ENCODE measurements at regions of chr14 and their contacts with region 1.

Region 1: GRCh38 chr14:73728717-73729330 is 14.6 kb upstream of the PNMA1 start:
- DNase-seq: peak; percentile 80 to 90
- H3K4me3 ChIP-seq: no peak overlapping the region
- H3K4me3 Mint-ChIP-seq: no peak overlapping the region
- H3K27ac Mint-ChIP-seq: peak overlapping the region; percentile 60
- H3K4me1 ChIP-seq: peaks cover 21% of the 10 kb centered on the region
- H3K4me1 Mint-ChIP-seq: peaks cover 5% of the 10 kb centered on the region
- H3K27me3 ChIP-seq: no peaks in the 10 kb centered on the region
- H3K27me3 Mint-ChIP-seq: no peaks in the 10 kb centered on the region
- CTCF ChIP-seq: peak; percentile 91 to 95

Region 2: DNA sequence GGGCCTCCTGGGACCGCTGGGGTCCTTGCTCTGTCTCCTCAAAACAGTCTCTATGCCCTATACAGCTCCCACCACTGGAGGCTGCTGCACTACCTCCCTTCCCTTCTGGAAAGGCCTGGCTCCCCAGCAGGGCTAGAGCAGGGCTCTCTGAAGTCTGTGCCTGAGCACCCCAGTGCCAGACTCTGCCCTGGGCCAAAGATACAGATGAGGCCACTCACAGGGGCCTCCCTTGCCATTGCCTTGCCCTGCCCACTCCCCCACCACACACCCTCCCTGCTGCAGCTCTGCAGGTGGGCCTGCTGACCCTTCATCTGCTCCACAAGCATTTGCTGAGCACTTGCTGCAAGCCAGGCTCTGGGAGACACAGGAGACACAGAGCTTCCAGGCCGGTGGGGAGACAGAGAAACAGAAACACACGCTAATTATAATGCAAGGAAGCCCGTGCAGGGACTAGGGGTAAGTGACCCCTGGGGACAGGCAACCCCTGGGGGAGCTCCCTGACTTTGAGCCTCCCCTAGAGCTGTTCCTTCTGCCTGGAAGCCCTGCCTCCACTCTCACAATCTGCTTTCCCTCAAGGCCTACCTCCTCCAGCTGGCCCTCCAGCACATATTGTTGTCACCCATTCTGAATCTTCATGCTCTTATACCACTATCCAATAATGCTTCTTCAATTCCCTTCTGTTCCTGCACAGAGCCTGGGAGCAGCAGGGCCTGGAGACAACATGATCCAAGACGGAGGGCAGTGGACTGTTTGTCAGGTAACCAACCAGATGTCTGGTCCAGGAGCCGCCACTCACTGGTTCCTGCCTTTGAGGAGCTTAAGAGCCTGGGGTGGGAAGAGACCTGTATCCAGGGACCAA is 17.9 kb after region 1 on chr14:
- CTCF ChIA-PET with region 1: interaction called, 32 read pairs
- POLR2A ChIA-PET with region 1: no interaction called
- intact Hi-C with region 1: no loop called
- DNase-seq: no peak
- H3K4me3 ChIP-seq: no peak overlapping the region
- H3K4me3 Mint-ChIP-seq: no peak overlapping the region
- H3K27ac Mint-ChIP-seq: no peak overlapping the region
- H3K4me1 ChIP-seq: peaks cover 58% of the 10 kb centered on the region
- H3K4me1 Mint-ChIP-seq: peaks cover 24% of the 10 kb centered on the region
- H3K27me3 ChIP-seq: no peaks in the 10 kb centered on the region
- H3K27me3 Mint-ChIP-seq: no peaks in the 10 kb centered on the region
- CTCF ChIP-seq: peak in 1 of 2 experiments; percentile 31

Region 3: GRCh38 chr14:73771848-73772638 is 43.2 kb after region 1 on chr14:
- CTCF ChIA-PET with region 1: interaction called, 10 read pairs
- POLR2A ChIA-PET with region 1: no interaction called
- intact Hi-C with region 1: no loop called
- DNase-seq: peak; percentile 91 to 94
- H3K4me3 ChIP-seq: no peak overlapping the region
- H3K4me3 Mint-ChIP-seq: peak overlapping the region; percentile 44
- H3K27ac Mint-ChIP-seq: peak overlapping the region; percentile 51
- H3K4me1 ChIP-seq: peaks cover 31% of the 10 kb centered on the region
- H3K4me1 Mint-ChIP-seq: peaks cover 50% of the 10 kb centered on the region
- H3K27me3 ChIP-seq: no peaks in the 10 kb centered on the region
- H3K27me3 Mint-ChIP-seq: no peaks in the 10 kb centered on the region
- CTCF ChIP-seq: no peak

Region 4: DNA sequence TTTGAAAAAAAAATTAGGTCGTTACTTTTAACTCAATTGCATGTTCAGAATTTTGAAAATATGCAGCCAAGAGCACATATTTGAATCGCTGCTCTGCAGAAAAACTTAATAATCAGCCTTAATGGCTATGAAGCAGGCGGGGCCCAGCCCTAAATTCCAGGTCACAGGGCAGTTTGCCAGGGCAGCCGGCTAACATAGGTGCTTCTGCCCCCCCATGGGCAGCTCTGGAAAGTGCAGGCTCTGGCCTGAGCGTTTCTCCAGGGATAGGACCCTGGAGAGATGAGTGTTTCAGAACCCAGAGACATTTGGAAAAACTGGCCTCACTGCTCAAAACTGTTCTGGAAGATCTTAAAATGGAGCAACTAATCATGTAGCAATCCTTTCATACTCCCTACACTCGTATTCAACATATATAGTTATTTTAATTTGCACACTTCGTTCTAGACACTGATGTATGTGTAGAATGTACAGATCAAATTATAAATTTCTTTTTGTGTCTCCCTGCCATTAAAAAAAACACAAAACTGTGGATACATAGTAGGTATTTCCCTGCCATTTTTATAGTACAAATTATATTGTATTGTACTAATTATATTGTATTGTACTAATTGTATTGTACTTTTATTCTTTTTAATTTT is 96.8 kb after region 1 on chr14:
- CTCF ChIA-PET with region 1: interaction called, 19 read pairs
- POLR2A ChIA-PET with region 1: no interaction called
- intact Hi-C with region 1: loop called (anchors 1 kb)
- DNase-seq: peak; percentile 79 to 86
- H3K4me3 ChIP-seq: no peak overlapping the region
- H3K4me3 Mint-ChIP-seq: no peak overlapping the region
- H3K27ac Mint-ChIP-seq: no peak overlapping the region
- H3K4me1 ChIP-seq: peaks cover 4% of the 10 kb centered on the region; the same call in 1 of the 2 replicates
- H3K4me1 Mint-ChIP-seq: peaks cover 8% of the 10 kb centered on the region
- H3K27me3 ChIP-seq: no peaks in the 10 kb centered on the region
- H3K27me3 Mint-ChIP-seq: no peaks in the 10 kb centered on the region
- CTCF ChIP-seq: peak; percentile 89 to 93

Region 5: GRCh38 chr14:73865536-73866113 is 136.8 kb after region 1 on chr14:
- CTCF ChIA-PET with region 1: interaction called, 10 read pairs
- POLR2A ChIA-PET with region 1: no interaction called
- intact Hi-C with region 1: loop called (anchors 1 kb)
- DNase-seq: no peak
- H3K4me3 ChIP-seq: no peak overlapping the region
- H3K4me3 Mint-ChIP-seq: no peak overlapping the region
- H3K27ac Mint-ChIP-seq: no peak overlapping the region
- H3K4me1 ChIP-seq: no peaks in the 10 kb centered on the region
- H3K4me1 Mint-ChIP-seq: no peaks in the 10 kb centered on the region
- H3K27me3 ChIP-seq: no peaks in the 10 kb centered on the region
- H3K27me3 Mint-ChIP-seq: no peaks in the 10 kb centered on the region
- CTCF ChIP-seq: no peak

Region 6: DNA sequence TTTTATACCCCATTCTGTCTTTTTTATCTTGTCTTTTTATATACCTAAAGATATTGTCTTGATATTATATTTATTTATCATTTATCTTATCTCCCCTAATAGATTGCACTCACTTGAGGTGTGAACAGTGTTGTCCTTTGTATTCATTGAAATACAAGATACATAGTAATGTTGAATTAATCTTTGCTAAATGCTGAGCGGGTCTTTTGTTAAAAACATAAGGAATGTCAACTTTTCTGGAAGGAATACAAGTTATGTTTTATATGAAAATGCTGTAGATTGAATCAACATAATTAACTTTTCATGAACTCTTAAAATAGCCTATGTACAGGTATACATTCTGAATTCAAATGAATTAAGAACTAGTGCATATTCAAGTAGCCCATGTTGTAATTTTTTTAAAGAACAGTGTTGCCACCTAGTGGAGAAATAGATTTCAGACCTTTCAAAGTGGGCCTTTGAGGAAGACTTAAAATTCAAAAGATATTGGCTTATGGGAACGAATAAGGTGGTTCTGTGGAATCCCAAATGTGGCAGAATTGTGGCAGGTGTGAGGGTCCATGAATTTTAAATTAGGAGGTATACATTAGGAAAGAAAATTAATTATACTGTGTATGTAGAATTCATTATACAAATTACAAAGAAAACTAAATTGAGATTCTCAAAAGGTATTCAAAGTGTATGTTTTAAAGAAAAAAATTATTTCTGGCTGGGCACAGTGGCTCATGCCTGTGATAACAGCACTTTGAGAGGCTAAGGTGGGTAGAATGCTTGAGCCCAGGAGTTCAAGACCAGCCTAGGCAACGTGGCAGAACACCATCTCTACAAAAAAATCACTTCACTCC is 309.4 kb after region 1 on chr14:
- CTCF ChIA-PET with region 1: no interaction called
- POLR2A ChIA-PET with region 1: no interaction called
- intact Hi-C with region 1: loop called (anchors 1 kb)
- DNase-seq: peak in 1 of 2 experiments; percentile 56
- H3K4me3 ChIP-seq: no peak overlapping the region
- H3K4me3 Mint-ChIP-seq: no peak overlapping the region
- H3K27ac Mint-ChIP-seq: no peak overlapping the region
- H3K4me1 ChIP-seq: no peaks in the 10 kb centered on the region
- H3K4me1 Mint-ChIP-seq: no peaks in the 10 kb centered on the region
- H3K27me3 ChIP-seq: no peaks in the 10 kb centered on the region
- H3K27me3 Mint-ChIP-seq: no peaks in the 10 kb centered on the region
- CTCF ChIP-seq: peak; percentile 65 to 70

Measured in Caco-2 (cell line).